Uterus (tissue), 4 donors: ENCODE measurements at regions of chr19 and their contacts with region 1.

Region 1: GRCh38 chr19:11203194-11204075 is 6.1 kb upstream of the KANK2 start:
- DNase-seq: peak; percentile 93 to 98
- H3K4me3 ChIP-seq: no peak overlapping the region
- H3K27ac ChIP-seq: peak overlapping the region; percentile 98 to 99
- H3K4me1 ChIP-seq: peaks cover 4 to 5% of the 10 kb centered on the region in 2 donors
- H3K27me3 ChIP-seq: no peaks in the 10 kb centered on the region
- CTCF ChIP-seq: peak; percentile 90 to 98 (median 96)
- POLR2A ChIP-seq: no peak

Region 2: GRCh38 chr19:10946964-10947657 is 256.3 kb before region 1 on chr19:
- intact Hi-C with region 1: no loop called
- DNase-seq: no peak
- H3K4me3 ChIP-seq: no peak overlapping the region
- H3K27ac ChIP-seq: no peak overlapping the region
- H3K4me1 ChIP-seq: no peaks in the 10 kb centered on the region
- H3K27me3 ChIP-seq: no peaks in the 10 kb centered on the region
- CTCF ChIP-seq: no peak
- POLR2A ChIP-seq: no peak

Region 3: GRCh38 chr19:11035441-11036377 is 167.7 kb before region 1 on chr19:
- intact Hi-C with region 1: loop called (anchors 10 kb)
- DNase-seq: peak; percentile 89 to 91
- H3K4me3 ChIP-seq: no peak overlapping the region
- H3K27ac ChIP-seq: peak overlapping the region in 1 of 2 donors; percentile 23
- H3K4me1 ChIP-seq: no peaks in the 10 kb centered on the region
- H3K27me3 ChIP-seq: no peaks in the 10 kb centered on the region
- CTCF ChIP-seq: peak; percentile 83 to 92 (median 88)
- POLR2A ChIP-seq: peak in 1 of 2 donors; percentile 4

Region 4: GRCh38 chr19:11137542-11138384 is 65.7 kb before region 1 on chr19:
- intact Hi-C with region 1: loop called (anchors 5 kb)
- DNase-seq: peak; percentile 91
- H3K4me3 ChIP-seq: peak overlapping the region; percentile 1 to 30
- H3K27ac ChIP-seq: peak overlapping the region; percentile 95 to 99
- H3K4me1 ChIP-seq: peaks cover 12 to 22% of the 10 kb centered on the region in 2 donors
- H3K27me3 ChIP-seq: no peaks in the 10 kb centered on the region
- CTCF ChIP-seq: peak; percentile 89 to 98 (median 90)
- POLR2A ChIP-seq: peak in 1 of 2 donors; percentile 29

Region 5: DNA sequence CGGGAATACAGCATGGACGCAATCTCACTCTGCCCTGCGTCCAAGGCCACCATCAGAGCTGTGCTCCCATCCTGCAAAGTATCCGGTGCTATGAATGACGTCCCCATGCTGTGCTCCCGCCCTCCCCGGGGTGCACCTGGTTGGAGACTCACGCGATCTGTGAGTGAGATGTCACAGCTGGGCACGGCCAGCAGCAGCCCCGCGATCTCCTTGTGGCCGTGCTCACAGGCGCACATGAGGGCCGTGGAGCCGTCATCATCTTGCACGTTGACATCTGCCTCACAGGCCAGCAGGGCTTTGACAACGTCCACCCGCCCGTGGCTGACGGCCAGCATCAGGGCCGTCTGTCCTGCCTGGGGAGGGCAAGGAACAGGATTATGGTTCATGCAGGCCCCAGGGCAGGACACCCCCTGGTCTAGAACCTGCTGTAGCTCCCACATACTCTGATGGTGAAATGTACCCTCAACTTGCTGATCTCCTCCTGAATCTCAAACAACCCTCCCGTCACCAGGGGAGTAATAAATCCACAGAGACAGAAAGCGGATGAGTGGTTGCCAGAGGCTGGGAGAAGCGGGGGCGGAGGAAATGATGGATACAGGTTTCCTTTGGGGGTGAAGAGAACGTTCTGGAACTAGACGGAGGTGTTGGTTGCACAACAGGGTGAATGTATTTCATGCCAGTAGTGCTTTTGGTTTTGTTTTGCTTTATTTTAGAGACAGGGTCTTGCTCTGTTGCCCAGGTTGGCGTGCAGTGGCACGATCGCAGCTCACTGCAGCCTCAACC is 33.3 kb before region 1 on chr19:
- intact Hi-C with region 1: no loop called
- DNase-seq: peak; percentile 79 to 81
- H3K4me3 ChIP-seq: no peak overlapping the region
- H3K27ac ChIP-seq: peak overlapping the region; percentile 93 to 96
- H3K4me1 ChIP-seq: peaks cover 17 to 36% of the 10 kb centered on the region in 2 donors
- H3K27me3 ChIP-seq: no peaks in the 10 kb centered on the region
- CTCF ChIP-seq: no peak
- POLR2A ChIP-seq: no peak

Region 6: DNA sequence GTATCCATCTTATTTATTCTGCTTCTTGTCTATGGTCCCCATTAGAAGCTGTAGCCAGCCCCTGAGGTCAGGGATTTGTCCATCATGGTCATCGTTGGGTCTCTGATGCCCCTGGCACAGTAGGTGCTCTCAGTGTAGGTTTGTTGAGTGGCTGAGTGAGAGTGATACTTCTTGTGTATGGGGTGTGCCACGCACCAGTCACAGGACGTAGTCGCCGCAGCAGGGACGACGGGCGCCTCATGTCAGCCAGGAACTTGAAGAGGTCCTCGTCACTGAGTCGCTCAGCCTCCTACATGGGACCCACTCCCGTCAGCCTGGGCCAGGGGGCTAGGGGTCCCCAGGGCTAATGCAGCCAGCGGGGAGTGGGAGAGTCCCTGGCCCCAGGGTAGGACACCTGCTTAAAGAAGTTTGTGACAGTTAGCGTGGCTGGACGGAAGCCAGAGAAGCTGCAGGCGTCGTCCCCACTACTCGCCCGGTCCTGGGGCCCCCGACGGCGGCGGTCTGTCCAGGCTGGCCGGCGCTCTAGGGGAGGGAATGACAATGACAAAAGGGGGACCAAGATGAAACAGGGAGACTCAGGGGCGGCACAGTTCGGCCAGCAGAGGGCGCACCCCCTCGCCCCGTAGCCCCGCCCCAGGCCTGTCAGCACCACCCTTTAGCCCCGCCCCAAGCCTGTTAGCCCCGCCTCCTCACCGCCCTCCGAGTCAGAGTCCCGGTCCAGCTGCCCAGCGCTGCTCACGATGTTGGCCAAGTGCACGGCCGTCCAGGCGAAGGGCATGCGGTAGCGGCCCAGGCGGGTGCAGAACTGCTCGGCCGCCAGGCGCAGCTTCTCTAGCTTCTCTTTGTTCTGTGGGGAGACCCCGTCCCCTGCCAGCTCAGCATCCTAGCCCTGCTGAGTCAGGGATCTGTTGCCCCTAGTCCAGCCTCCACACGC is 39.7 kb after region 1 on chr19:
- intact Hi-C with region 1: no loop called
- DNase-seq: peak; percentile 90 to 93
- H3K4me3 ChIP-seq: no peak overlapping the region
- H3K27ac ChIP-seq: peak overlapping the region in 1 of 2 donors; percentile 53
- H3K4me1 ChIP-seq: no peaks in the 10 kb centered on the region
- H3K27me3 ChIP-seq: no peaks in the 10 kb centered on the region
- CTCF ChIP-seq: peak; percentile 43 to 71 (median 59)
- POLR2A ChIP-seq: peak in 1 of 2 donors; percentile 49